Activated B cell treated with CpG ODN at 0.5 μM for 24 hours (primary cell): ENCODE measurements at regions of chr7 and their contacts with region 1.

Region 1: DNA sequence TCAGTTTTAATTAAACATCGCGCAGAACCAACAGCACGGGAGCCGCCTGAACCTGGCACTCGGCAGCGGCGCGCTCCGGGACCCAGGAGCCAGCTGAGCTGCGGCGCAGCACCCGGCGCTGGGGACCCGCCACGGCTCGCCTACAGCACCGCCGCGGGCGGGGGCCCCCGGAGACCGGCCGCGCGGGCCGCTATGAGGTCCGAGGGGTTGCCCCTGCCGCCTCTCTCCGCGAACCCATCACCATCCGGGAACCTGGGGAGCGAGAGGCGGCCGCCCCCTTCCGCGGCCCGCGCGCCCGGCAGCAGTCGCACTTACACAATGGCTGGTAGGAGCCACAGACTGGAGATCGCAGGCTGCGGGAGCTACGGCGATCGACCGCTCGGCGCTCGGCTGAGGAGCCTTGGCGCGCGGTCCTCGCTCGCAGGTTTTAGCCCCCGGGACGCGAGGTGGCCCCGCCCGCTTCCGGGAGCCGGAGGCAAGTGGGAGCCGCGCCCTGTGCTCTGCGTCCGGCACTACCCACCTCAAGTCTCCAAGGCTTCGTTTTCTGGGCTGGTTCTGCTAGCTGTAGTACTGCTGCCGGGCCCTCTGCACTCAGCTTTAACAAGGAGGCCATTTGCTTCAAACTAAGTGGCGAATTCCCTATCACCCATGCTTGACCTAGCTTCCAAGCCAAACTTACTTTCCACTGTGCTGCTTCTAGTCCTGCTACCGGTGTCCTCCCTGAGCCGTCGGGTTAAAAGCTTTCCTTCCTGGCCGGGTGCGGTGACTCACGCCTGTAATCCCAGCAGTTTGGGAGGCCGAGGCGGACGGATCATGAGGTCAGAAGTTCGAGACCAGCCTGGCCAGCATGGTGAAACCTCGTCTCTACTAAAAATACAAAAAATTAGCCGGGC is at the start of gene TPK1:
- DNase-seq: peak; percentile 88
- ATAC-seq: peak; percentile 85
- H3K4me3 Mint-ChIP-seq: peak within 1 kb of the TSS; percentile 98
- H3K27ac Mint-ChIP-seq: peak within 1 kb of the TSS; percentile 99
- H3K4me1 Mint-ChIP-seq: peaks cover 28% of the 10 kb centered on the region
- H3K27me3 Mint-ChIP-seq: no peaks in the 10 kb centered on the region
- CTCF ChIP-seq: no peak
- total RNA-seq, gene TPK1: 17.5 and 20.0 TPM in 2 replicates

Region 2: DNA sequence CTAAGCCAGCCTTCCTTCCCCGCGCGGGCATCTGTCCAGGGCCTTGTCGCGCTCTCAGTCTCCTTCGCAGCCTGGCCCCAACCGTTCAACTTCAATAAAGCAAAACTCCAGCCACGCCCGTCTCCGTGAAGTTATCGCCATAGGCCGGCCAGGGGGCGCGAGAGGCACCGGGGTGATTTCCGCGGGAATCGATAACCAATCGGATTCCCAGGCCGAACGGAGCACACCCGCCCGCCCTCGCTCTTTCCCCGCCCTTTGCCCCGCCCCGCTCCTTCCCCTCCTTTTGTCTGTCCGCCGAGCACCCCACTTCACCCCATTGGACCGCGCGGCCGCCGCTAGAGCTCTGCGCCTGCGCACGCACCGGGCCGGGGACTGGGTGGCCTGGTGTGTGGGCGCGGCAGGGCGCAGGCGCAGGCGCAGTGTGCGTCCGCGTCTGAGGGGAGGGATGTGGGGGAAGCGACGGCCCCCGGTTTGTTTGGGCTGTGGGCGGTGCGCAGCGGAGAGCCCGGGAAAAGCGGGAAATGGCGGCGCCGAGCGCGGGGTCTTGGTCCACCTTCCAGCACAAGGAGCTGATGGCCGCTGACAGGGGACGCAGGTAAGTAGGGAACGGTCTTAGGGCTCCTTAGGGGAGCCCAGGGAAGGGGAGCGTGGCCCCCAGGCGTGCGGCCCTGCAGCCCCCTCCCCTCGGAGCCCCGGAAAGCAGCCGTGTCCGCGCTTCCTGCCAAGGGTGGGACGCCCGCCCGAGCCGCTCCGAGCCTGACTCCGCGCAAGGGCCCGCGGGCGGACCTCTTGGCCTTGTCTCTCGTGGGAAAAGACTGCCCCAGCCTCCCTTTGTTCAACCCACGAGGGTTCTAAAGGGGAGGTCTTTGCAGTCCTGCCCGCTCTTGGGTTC is 1547.7 kb before region 1 on chr7 and contains the start of gene CASP2:
- CTCF ChIA-PET with region 1: no interaction called
- POLR2A ChIA-PET with region 1: interaction called, 6 read pairs
- intact Hi-C with region 1: loop called (anchors 10 kb)
- DNase-seq: peak; percentile 97
- ATAC-seq: peak; percentile 91
- H3K4me3 Mint-ChIP-seq: peak within 1 kb of the TSS; percentile 96
- H3K27ac Mint-ChIP-seq: peak within 1 kb of the TSS; percentile 89
- H3K4me1 Mint-ChIP-seq: peaks cover 54% of the 10 kb centered on the region
- H3K27me3 Mint-ChIP-seq: no peaks in the 10 kb centered on the region
- CTCF ChIP-seq: no peak
- total RNA-seq, gene CASP2: 59.5 and 62.2 TPM in 2 replicates

Region 3: DNA sequence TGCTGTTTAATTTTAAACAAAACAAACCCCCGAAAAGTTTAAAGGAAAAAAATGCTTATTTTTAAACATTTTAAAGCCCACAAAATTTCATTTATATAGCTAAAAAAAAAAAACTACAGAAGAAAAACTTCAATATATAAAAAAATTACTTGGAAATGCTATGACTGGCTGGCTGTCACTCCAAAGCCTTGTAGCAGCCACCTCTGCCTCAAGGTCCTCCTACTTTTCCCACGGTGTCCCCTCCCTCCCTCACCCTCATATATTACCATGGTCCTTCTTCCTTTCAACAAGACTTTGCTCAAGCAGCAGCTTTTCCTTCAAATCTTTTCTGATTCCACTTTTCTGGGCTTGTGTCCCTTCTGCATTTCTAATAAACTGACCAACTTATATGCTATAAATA is 122.0 kb before region 1 on chr7:
- CTCF ChIA-PET with region 1: no interaction called
- POLR2A ChIA-PET with region 1: no interaction called
- intact Hi-C with region 1: no loop called
- DNase-seq: no peak
- ATAC-seq: no peak
- H3K4me3 Mint-ChIP-seq: no peak overlapping the region
- H3K27ac Mint-ChIP-seq: no peak overlapping the region
- H3K4me1 Mint-ChIP-seq: no peaks in the 10 kb centered on the region
- H3K27me3 Mint-ChIP-seq: no peaks in the 10 kb centered on the region
- CTCF ChIP-seq: no peak

Region 4: DNA sequence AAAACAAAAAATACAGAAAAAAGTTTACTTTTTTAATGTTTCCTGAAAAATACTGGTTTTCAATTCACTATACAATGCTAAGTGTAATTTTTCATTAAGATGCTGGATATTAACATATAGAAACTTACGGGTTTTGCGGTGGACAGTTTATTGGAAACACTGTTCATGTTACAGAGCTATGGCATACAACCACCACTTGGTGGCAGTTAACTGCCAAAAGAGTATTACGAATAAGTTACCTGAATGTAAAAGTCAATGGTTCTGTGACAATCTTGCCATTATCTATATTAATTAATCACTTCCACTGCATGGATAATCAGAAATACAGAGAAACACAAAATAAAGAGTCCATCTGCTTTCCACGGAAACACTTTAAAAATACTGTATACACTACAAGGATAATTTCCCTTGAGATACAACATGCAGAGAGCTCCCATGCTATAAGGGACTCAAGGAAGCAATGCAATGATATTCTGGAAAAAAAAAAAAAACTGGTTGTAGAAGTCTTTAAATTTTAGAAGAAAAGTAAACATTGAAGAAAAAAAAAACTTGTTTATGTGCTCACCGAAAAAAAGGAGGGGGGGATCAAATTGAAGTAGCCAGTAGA is 97.1 kb before region 1 on chr7:
- CTCF ChIA-PET with region 1: interaction called, 18 read pairs
- POLR2A ChIA-PET with region 1: interaction called, 18 read pairs
- intact Hi-C with region 1: loop called (anchors 1 kb)
- DNase-seq: no peak
- ATAC-seq: peak; percentile 52
- H3K4me3 Mint-ChIP-seq: no peak overlapping the region
- H3K27ac Mint-ChIP-seq: no peak overlapping the region
- H3K4me1 Mint-ChIP-seq: peaks cover 2% of the 10 kb centered on the region
- H3K27me3 Mint-ChIP-seq: no peaks in the 10 kb centered on the region
- CTCF ChIP-seq: peak; percentile 68

Region 5: DNA sequence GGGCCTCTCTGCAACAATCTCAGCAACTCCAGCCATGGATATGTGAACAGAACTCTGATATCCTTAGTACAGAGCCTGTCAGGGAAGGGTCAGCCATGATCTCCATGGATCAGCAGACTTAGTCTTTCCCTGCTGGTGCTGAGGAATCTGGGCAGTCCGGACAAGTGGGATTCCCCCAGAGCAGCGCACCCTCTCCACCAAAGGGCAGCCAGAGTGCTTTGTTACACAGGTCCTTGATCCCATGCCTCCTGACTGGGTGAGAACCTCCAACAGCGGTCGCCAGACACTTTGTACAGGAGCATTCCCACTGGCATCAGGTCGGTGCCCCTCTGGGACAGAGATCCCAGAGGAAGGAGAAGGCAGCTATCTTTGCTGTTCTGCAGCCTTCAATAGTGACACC is 39.0 kb before region 1 on chr7:
- CTCF ChIA-PET with region 1: no interaction called
- POLR2A ChIA-PET with region 1: interaction called, 31 read pairs
- intact Hi-C with region 1: no loop called
- DNase-seq: no peak
- ATAC-seq: no peak
- H3K4me3 Mint-ChIP-seq: no peak overlapping the region
- H3K27ac Mint-ChIP-seq: no peak overlapping the region
- H3K4me1 Mint-ChIP-seq: peaks cover 40% of the 10 kb centered on the region
- H3K27me3 Mint-ChIP-seq: no peaks in the 10 kb centered on the region
- CTCF ChIP-seq: no peak

Region 6: DNA sequence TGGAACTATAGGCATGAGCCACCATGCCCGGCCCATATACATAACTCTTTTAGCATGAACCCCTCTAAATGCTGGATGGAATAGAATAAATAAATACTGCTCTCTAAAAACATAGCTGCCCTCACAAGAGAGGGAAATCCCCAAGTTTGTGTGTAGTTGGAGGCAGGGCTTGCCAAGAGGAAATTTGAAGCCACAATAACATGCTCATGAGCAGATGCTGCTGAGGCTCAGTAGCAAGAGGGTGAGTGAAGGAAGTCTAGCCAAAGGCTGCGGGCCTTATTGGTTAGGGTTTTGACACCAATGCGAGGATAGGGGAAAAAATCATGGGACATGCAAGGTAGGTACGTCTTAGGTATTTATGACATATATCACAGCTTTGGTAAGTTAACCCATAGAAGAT is 17.4 kb before region 1 on chr7:
- CTCF ChIA-PET with region 1: interaction called, 5 read pairs
- POLR2A ChIA-PET with region 1: interaction called, 117 read pairs
- intact Hi-C with region 1: loop called (anchors 1 kb)
- DNase-seq: no peak
- ATAC-seq: peak; percentile 94
- H3K4me3 Mint-ChIP-seq: peak overlapping the region; percentile 55
- H3K27ac Mint-ChIP-seq: peak overlapping the region; percentile 84
- H3K4me1 Mint-ChIP-seq: peaks cover 70% of the 10 kb centered on the region
- H3K27me3 Mint-ChIP-seq: no peaks in the 10 kb centered on the region
- CTCF ChIP-seq: no peak

Region 7: DNA sequence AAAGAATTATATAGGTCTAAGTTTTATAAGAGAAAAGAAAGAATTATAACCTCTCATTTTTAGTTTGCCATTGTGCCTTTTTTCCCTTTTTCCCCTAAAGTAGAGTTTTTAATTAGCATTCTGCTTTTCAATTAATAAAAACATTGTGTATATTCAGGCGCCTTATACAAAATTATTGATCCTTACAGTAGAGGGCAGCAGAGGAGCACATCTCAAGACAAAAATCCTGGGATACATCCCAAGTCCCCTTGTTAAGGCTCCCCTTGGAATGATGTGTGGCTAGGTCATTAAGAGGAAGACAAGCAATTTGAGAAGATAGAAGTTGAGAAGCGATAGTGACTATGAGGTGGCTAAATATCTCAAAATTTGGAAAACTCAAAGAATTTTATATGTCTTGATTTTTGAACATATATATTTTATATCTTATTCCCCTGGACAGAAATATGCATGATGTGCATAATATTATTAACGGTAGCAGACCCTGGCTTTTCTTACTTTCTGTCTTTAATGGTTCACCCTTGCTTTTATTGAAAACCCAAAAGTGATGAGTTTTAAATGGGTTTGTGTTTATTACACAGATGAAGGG is 19.0 kb after region 1 on chr7:
- CTCF ChIA-PET with region 1: interaction called, 3 read pairs
- POLR2A ChIA-PET with region 1: interaction called, 7 read pairs
- intact Hi-C with region 1: loop called (anchors 2 kb)
- DNase-seq: no peak
- ATAC-seq: no peak
- H3K4me3 Mint-ChIP-seq: no peak overlapping the region
- H3K27ac Mint-ChIP-seq: no peak overlapping the region
- H3K4me1 Mint-ChIP-seq: no peaks in the 10 kb centered on the region
- H3K27me3 Mint-ChIP-seq: peaks cover 11% of the 10 kb centered on the region
- CTCF ChIP-seq: no peak

Region 8: GRCh38 chr7:144866189-144866588 is 30.3 kb after region 1 on chr7:
- CTCF ChIA-PET with region 1: no interaction called
- POLR2A ChIA-PET with region 1: no interaction called
- intact Hi-C with region 1: no loop called
- DNase-seq: no peak
- ATAC-seq: no peak
- H3K4me3 Mint-ChIP-seq: no peak overlapping the region
- H3K27ac Mint-ChIP-seq: no peak overlapping the region
- H3K4me1 Mint-ChIP-seq: no peaks in the 10 kb centered on the region
- H3K27me3 Mint-ChIP-seq: peaks cover 10% of the 10 kb centered on the region
- CTCF ChIP-seq: no peak

Region 9: DNA sequence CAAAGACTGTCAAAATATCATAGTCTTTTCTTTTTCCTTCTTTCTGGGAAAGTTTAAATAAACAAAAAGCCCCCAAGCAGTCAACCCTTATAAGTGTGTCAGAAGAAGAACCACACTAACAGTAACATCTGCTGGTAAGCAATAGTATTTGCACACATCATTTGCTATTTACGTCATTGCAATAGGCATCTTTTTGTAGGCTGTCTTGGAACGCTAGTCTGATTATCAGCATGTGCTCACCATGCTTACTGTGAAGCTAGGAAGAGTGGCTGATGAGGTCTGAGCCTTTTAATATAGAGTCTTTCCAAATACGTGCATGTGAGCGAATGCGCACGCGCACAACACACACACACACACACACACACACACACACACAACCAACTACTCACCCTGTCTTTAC is 598.9 kb after region 1 on chr7:
- CTCF ChIA-PET with region 1: no interaction called
- POLR2A ChIA-PET with region 1: no interaction called
- intact Hi-C with region 1: no loop called
- DNase-seq: no peak
- ATAC-seq: no peak
- H3K4me3 Mint-ChIP-seq: no peak overlapping the region
- H3K27ac Mint-ChIP-seq: no peak overlapping the region
- H3K4me1 Mint-ChIP-seq: no peaks in the 10 kb centered on the region
- H3K27me3 Mint-ChIP-seq: no peaks in the 10 kb centered on the region
- CTCF ChIP-seq: no peak